GM12878 (cell line): ENCODE measurements at regions of chr16 and their contacts with region 1.

Region 1: GRCh38 chr16:57013229-57013628 is 23.9 kb downstream of the NLRC5 start:
- DNase-seq: no peak
- ATAC-seq: no peak
- H3K4me3 ChIP-seq: no peak overlapping the region
- H3K27ac ChIP-seq: peak overlapping the region; percentile 95
- H3K4me1 ChIP-seq: peaks cover 47% of the 10 kb centered on the region
- H3K27me3 ChIP-seq: no peaks in the 10 kb centered on the region
- CTCF ChIP-seq: no peak
- EP300 ChIP-seq: no peak
- POLR2A ChIP-seq: no peak
- RAD21 ChIP-seq: no peak

Region 2: GRCh38 chr16:56729735-56730662 is 283.2 kb before region 1 on chr16 and contains the start of gene NUP93:
- CTCF ChIA-PET with region 1: no interaction called
- POLR2A ChIA-PET with region 1: no interaction called
- RAD21 ChIA-PET with region 1: no interaction called
- SMC1A ChIA-PET with region 1: no interaction called
- in situ Hi-C with region 1: no loop called
- intact Hi-C with region 1: no loop called
- DNase-seq: peak; percentile 47
- ATAC-seq: peak; percentile 84
- H3K4me3 ChIP-seq: peak within 1 kb of the TSS; percentile 95
- H3K27ac ChIP-seq: peak within 1 kb of the TSS; percentile 56
- H3K4me1 ChIP-seq: peaks cover 20% of the 10 kb centered on the region
- H3K27me3 ChIP-seq: no peaks in the 10 kb centered on the region
- CTCF ChIP-seq: 0 out of 6 replicates have a peak, but pooled peaks of 1 of the 3 experiments have one; percentile 4
- EP300 ChIP-seq: no peak
- POLR2A ChIP-seq: peak; percentile 93
- RAD21 ChIP-seq: no peak
- polyA plus RNA-seq, gene NUP93: 87.9 to 118 TPM

Region 3: DNA sequence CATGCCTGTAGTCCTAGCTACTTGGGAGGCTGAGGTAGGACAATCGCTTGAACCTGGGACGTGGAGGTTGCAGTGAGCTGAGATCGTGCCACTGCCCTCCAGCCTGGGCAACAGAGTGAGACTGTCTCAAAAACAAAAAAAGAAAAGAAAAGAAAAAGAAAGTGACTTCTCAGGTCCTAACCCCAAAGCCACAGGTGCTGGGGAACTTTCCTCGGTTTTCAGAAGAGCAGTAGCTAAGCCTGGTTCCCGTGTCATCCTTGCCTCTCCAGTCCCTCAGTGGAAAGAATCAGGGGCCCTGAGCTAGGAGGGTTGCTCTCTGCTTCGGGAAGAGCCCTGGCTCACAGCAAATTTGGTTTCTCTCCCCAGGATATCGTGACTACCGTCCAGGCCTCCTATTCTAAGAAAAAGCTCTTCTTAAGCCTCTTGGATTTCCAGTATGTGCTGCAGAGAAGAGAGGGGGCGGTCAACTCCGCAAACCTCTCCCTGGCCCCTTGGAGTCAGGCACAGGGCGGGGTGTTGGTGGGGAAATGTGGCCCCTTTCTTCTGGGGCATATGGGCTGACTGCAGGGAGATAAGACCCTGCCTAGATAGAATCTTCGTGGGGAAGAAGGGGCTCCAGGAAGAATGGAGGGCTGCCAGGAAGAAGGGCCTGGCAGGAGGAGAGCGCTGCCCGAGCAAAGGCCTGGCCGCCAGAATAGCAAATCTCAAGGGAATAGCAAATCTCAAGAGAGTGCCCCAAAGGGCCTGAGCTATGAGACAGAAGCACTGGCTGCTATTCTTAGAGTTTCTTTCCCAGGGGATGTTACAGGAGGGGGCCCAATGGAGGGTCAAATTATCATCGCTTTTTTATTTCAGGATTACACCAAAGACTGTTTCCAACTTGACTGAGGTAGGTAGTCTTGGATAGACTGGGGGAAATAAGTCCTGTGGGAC is 32.2 kb before region 1 on chr16:
- CTCF ChIA-PET with region 1: interaction called, 11 read pairs
- POLR2A ChIA-PET with region 1: interaction called, 15 read pairs
- RAD21 ChIA-PET with region 1: interaction called, 473 read pairs
- SMC1A ChIA-PET with region 1: interaction called, 604 read pairs
- in situ Hi-C with region 1: no loop called
- intact Hi-C with region 1: no loop called
- DNase-seq: no peak
- ATAC-seq: peak; percentile 67
- H3K4me3 ChIP-seq: no peak overlapping the region
- H3K27ac ChIP-seq: peak overlapping the region; percentile 41
- H3K4me1 ChIP-seq: peaks cover 48% of the 10 kb centered on the region
- H3K27me3 ChIP-seq: no peaks in the 10 kb centered on the region
- CTCF ChIP-seq: no peak
- EP300 ChIP-seq: no peak
- POLR2A ChIP-seq: no peak
- RAD21 ChIP-seq: no peak

Region 4: DNA sequence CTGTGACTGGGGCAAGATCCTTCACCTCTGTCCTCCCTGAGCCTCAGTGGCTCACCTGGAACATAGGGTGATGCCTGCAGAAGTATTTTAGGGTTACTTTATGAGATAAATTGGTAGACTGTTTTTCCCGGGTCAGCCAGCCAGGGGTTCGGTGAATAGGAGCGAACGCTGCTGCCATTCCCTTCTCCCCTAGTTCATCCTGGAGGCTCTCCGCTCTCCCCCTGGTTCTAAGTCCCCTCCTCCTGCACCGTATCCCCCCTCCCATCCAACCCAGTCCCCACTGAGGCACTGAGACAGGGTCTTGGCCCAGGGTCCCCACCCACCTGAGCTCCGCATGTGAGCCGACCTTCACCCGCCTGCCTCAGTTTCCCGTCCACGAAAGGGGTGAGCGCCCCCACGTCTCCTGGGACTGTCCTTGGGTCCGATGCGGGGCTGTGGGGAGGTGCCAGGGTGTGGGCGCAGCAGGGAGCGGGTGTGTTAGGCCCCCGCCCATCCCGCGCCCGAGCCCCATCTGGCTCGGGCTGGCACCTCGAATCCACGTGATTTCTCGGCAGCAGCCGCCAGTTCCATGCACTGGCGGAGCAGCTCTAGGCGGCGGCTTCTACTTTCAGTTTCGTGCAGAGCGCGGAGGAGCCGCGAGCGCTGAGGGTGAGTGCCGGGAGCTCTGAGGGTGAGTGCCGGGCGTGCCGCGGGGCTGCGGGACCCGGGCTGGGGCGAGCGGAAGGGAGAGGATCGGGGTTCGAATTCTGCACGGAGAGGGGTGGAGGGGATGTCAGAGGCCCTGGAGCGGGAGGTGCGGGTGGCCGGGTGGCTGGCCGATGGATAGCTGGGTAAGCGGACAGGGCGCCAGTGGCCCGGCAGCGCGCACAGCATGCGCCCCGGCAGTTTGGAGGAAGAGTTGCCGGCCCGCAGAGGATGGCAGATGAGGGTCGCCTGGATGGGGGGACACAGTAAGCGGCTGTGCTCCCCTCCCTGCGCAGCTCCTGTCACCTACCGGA is 24.0 kb before region 1 on chr16 and contains the start of gene NLRC5:
- CTCF ChIA-PET with region 1: interaction called, 8 read pairs
- POLR2A ChIA-PET with region 1: interaction called, 27 read pairs
- RAD21 ChIA-PET with region 1: interaction called, 473 read pairs
- SMC1A ChIA-PET with region 1: interaction called, 604 read pairs
- in situ Hi-C with region 1: no loop called
- intact Hi-C with region 1: no loop called
- DNase-seq: no peak
- ATAC-seq: peak; percentile 83
- H3K4me3 ChIP-seq: peak within 1 kb of the TSS; percentile 79
- H3K27ac ChIP-seq: peak within 1 kb of the TSS; percentile 88
- H3K4me1 ChIP-seq: peaks cover 32% of the 10 kb centered on the region
- H3K27me3 ChIP-seq: no peaks in the 10 kb centered on the region
- CTCF ChIP-seq: no peak
- EP300 ChIP-seq: no peak
- POLR2A ChIP-seq: peak; percentile 87
- RAD21 ChIP-seq: no peak
- polyA plus RNA-seq, gene NLRC5: 13.1 to 14.2 TPM

Region 5: GRCh38 chr16:56994311-56994710 is 18.9 kb before region 1 on chr16:
- CTCF ChIA-PET with region 1: interaction called, 9 read pairs
- POLR2A ChIA-PET with region 1: interaction called, 31 read pairs
- RAD21 ChIA-PET with region 1: interaction called, 473 read pairs
- SMC1A ChIA-PET with region 1: interaction called, 604 read pairs
- in situ Hi-C with region 1: no loop called
- intact Hi-C with region 1: no loop called
- DNase-seq: no peak
- ATAC-seq: 0 out of 3 replicates have a peak, but pooled peaks have one; percentile 1
- H3K4me3 ChIP-seq: no peak overlapping the region; the same call in 1 of the 2 replicates
- H3K27ac ChIP-seq: peak overlapping the region; percentile 15
- H3K4me1 ChIP-seq: peaks cover 14% of the 10 kb centered on the region
- H3K27me3 ChIP-seq: no peaks in the 10 kb centered on the region
- CTCF ChIP-seq: no peak
- EP300 ChIP-seq: no peak
- POLR2A ChIP-seq: no peak
- RAD21 ChIP-seq: no peak

Region 6: DNA sequence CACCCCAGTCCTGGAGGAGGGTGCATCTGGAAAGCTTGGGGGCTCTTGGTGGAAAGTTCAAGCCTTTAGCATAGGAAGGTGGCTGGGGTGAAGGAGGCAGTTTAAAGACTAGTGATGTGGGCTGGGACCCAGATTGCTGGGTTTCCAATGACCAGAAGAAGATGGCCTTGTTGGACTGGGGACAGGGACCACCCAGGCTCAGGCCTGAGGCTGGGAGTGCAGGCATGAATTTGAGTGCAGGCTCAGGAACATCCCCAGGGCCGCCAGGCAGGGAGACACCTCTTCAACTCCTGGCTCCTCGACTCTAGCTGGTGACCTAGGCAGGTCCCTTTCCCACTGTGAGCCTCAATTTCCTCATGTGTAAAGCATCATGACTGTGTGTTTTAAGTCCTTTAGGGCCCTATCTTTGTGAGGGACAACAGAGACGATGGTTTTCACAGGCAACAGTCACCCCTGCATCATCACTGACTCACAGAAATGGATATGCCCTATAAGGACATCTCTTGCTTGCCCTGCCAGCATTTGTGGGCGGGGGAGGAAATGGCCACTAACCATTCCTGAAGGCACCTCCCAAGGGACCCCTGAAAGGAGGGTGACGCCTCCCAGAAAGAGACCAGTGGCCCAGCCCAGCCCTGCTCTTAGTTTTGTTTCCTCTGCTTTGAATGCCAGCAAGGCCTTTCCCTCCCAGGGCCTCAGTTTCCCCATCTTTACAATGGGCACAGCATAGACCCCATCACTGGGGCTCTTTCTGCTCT is 12.8 kb before region 1 on chr16:
- CTCF ChIA-PET with region 1: interaction called, 9 read pairs
- POLR2A ChIA-PET with region 1: interaction called, 31 read pairs
- RAD21 ChIA-PET with region 1: interaction called, 26 read pairs
- SMC1A ChIA-PET with region 1: interaction called, 20 read pairs
- in situ Hi-C with region 1: no loop called
- intact Hi-C with region 1: loop called (anchors 2 kb)
- DNase-seq: peak; percentile 87
- ATAC-seq: peak; percentile 80
- H3K4me3 ChIP-seq: peak overlapping the region; percentile 20; the same call in 1 of the 2 replicates
- H3K27ac ChIP-seq: peak overlapping the region; percentile 93
- H3K4me1 ChIP-seq: peaks cover 52% of the 10 kb centered on the region
- H3K27me3 ChIP-seq: no peaks in the 10 kb centered on the region
- CTCF ChIP-seq: no peak
- EP300 ChIP-seq: no peak
- POLR2A ChIP-seq: no peak; the same call in 1 of the 2 replicates
- RAD21 ChIP-seq: no peak

Region 7: GRCh38 chr16:57039148-57039812 is 26.1 kb after region 1 on chr16:
- CTCF ChIA-PET with region 1: interaction called, 21 read pairs
- POLR2A ChIA-PET with region 1: interaction called, 40 read pairs
- RAD21 ChIA-PET with region 1: interaction called, 14 read pairs
- SMC1A ChIA-PET with region 1: interaction called, 24 read pairs
- in situ Hi-C with region 1: no loop called
- intact Hi-C with region 1: loop called (anchors 2 kb)
- DNase-seq: peak; percentile 65
- ATAC-seq: peak; percentile 11
- H3K4me3 ChIP-seq: no peak overlapping the region
- H3K27ac ChIP-seq: peak overlapping the region; percentile 78
- H3K4me1 ChIP-seq: peaks cover 62% of the 10 kb centered on the region
- H3K27me3 ChIP-seq: no peaks in the 10 kb centered on the region
- CTCF ChIP-seq: no peak
- EP300 ChIP-seq: no peak
- POLR2A ChIP-seq: peak; percentile 33; the same call in 1 of the 2 replicates
- RAD21 ChIP-seq: no peak

Region 8: GRCh38 chr16:57061084-57061905 is 48.1 kb after region 1 on chr16:
- CTCF ChIA-PET with region 1: no interaction called
- POLR2A ChIA-PET with region 1: no interaction called
- RAD21 ChIA-PET with region 1: no interaction called
- SMC1A ChIA-PET with region 1: no interaction called
- in situ Hi-C with region 1: no loop called
- intact Hi-C with region 1: no loop called
- DNase-seq: no peak
- ATAC-seq: peak; percentile 16
- H3K4me3 ChIP-seq: no peak overlapping the region
- H3K27ac ChIP-seq: no peak overlapping the region
- H3K4me1 ChIP-seq: peaks cover 5% of the 10 kb centered on the region
- H3K27me3 ChIP-seq: no peaks in the 10 kb centered on the region
- CTCF ChIP-seq: no peak
- EP300 ChIP-seq: no peak
- POLR2A ChIP-seq: peak; percentile 41; the same call in 1 of the 2 replicates
- RAD21 ChIP-seq: no peak

Region 9: GRCh38 chr16:57331355-57331754 is 318.1 kb after region 1 on chr16:
- CTCF ChIA-PET with region 1: no interaction called
- POLR2A ChIA-PET with region 1: interaction called, 10 read pairs
- RAD21 ChIA-PET with region 1: no interaction called
- SMC1A ChIA-PET with region 1: no interaction called
- in situ Hi-C with region 1: no loop called
- intact Hi-C with region 1: no loop called
- DNase-seq: no peak
- ATAC-seq: no peak
- H3K4me3 ChIP-seq: no peak overlapping the region
- H3K27ac ChIP-seq: no peak overlapping the region
- H3K4me1 ChIP-seq: no peaks in the 10 kb centered on the region
- H3K27me3 ChIP-seq: no peaks in the 10 kb centered on the region
- CTCF ChIP-seq: no peak
- EP300 ChIP-seq: no peak
- POLR2A ChIP-seq: no peak
- RAD21 ChIP-seq: no peak